K562 (cell line): ENCODE measurements at regions of chr17 and their contacts with region 1.

Region 1: GRCh38 chr17:49031965-49032928 is 35.1 kb downstream of the IGF2BP1 start:
- DNase-seq: peak; percentile 71 to 85 (median 79)
- ATAC-seq: peak; percentile 91
- H3K4me3 ChIP-seq: no peak overlapping the region
- H3K27ac ChIP-seq: no peak overlapping the region
- H3K4me1 ChIP-seq: peaks cover 2 to 13% of the 10 kb centered on the region in 2 experiments; a peak in 4 of 5 replicates
- H3K27me3 ChIP-seq: no peaks in the 10 kb centered on the region
- CTCF ChIP-seq: peak; percentile 79 to 95 (median 85)
- EP300 ChIP-seq: no peak
- POLR2A ChIP-seq: no peak
- RAD21 ChIP-seq: peak; percentile 90 to 94

Region 2: DNA sequence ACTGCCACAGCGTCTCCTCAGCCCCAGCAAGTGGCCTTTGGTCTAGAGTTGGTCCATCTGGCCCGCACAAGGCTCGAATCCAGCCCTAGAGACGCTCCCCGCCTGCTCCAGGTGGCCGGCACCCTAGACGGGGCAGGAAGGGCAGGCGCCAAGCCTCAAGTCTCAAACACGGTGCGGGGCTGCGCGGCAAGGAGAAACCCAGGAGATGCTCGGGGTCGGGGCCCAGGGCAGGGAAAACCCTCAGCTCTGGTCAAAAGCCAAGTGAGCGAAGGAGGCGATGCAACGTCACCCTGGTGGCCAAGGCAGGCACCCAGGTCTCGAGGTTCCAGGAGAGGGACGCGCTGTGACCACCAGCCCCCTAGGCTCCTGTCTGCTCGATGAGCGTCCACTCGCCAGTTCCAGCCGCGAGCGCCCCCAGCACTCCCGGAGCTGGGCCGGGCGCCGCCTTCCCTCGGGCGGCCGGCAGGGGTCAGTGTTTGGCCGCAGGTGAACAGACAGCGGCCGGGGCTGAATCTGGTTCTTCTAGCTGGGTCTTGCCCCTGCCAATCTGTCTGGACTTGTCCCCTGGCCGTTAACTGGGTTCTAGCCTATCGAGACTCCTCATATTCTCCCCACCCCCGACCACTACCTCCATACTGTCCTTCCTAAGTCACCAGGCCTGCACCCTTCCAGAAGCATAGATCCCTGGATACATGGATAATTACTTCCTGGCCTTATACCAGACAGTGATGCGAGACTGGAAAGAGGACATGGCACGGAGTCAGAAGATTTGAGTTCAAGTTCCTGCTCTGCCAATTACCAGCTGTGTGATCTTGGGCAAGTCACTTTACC is 353.9 kb before region 1 on chr17:
- CTCF ChIA-PET with region 1: interaction called, 4 read pairs
- POLR2A ChIA-PET with region 1: no interaction called
- in situ Hi-C with region 1: loop called (anchors 25 kb)
- intact Hi-C with region 1: no loop called
- DNase-seq: peak; percentile 82 to 87 (median 85)
- ATAC-seq: peak; percentile 99
- H3K4me3 ChIP-seq: no peak overlapping the region
- H3K27ac ChIP-seq: no peak overlapping the region
- H3K4me1 ChIP-seq: peaks cover 0 to 8% of the 10 kb centered on the region in 2 experiments; a peak in 2 of 5 replicates
- H3K27me3 ChIP-seq: peaks cover 20 to 21% of the 10 kb centered on the region in 2 experiments; a peak in 4 of 5 replicates
- CTCF ChIP-seq: peak; percentile 96 to 99 (median 98)
- EP300 ChIP-seq: no peak
- POLR2A ChIP-seq: no peak
- RAD21 ChIP-seq: peak; percentile 85 to 90

Region 3: DNA sequence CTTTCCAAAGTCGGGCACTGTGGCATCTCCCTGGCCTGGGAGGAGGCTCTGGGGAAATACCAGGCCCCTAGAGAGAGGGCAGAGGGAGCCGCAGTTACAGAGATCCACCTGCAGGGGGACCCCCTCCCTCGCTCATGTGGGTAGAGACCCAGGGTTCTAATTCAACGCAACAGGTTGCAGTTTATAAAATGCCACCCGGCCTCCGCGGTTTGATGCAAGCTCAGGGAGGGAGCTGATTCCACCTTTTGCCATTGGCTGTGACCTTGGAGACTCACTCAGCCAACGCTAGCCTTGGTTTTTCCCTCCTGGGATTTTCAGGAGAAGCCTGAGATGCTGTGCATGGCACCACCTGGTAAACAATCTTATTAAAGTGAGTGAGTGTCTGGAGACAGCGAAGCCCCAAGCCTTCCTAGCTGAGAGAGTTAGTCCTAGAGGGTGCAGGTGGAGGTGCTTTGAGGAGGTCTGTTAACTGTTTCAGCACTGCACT is 227.3 kb before region 1 on chr17:
- CTCF ChIA-PET with region 1: interaction called, 12 read pairs
- POLR2A ChIA-PET with region 1: no interaction called
- in situ Hi-C with region 1: loop called (anchors 10 kb)
- intact Hi-C with region 1: loop called (anchors 10 kb)
- DNase-seq: peak; percentile 64 to 86 (median 84)
- ATAC-seq: peak; percentile 97
- H3K4me3 ChIP-seq: no peak overlapping the region
- H3K27ac ChIP-seq: no peak overlapping the region
- H3K4me1 ChIP-seq: no peaks in the 10 kb centered on the region
- H3K27me3 ChIP-seq: peaks cover 27 to 33% of the 10 kb centered on the region in 2 experiments
- CTCF ChIP-seq: peak; percentile 83 to 93 (median 92)
- EP300 ChIP-seq: no peak
- POLR2A ChIP-seq: no peak
- RAD21 ChIP-seq: peak; percentile 84 to 92

Region 4: DNA sequence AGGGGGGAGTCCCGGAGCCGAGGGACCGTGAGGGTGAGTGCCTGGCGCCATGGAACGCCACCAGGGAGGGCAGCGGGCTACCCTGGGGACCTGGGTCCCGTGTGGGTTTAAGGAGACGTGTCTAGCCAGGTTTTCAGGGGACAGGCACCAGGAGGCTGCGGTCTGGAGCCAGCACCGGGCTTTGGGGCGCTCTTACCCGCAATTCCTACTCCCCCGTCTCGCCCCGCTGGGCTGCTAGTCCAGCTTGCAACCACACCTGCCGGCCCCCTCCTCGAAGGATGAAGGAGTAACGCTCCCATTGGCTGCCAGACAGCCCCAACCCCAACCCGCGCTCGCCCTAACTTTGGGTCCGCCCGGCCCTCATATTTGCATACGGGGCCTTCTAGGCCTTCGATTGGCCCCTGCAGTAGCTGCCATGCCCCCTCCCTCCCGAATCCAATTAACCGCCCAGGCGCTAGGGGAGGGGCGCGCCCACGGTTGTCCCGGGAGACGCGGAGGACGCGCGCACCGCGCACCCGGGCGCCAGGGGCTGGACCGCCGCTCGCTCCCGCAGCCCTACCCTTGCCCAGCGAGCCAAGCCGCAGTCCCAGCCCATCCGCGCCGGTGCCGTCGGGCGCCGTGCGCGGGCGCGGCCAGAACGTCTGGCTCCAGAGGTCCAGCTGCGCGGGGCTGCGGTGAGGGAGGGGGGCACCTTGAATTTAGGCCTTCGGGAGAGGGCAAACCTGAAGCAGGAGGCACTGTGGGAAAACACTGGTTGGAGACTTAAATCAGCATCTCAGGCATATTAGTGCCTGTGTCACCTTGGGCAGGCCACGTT is 215.3 kb before region 1 on chr17 and contains the start of gene TTLL6:
- CTCF ChIA-PET with region 1: interaction called, 13 read pairs
- POLR2A ChIA-PET with region 1: no interaction called
- in situ Hi-C with region 1: loop called (anchors 10 kb)
- intact Hi-C with region 1: no loop called
- DNase-seq: peak; percentile 93 to 97 (median 96)
- ATAC-seq: peak; percentile 100
- H3K4me3 ChIP-seq: peak within 1 kb of the TSS; percentile 33
- H3K27ac ChIP-seq: no peak within 1 kb of the TSS
- H3K4me1 ChIP-seq: peaks cover 0 to 11% of the 10 kb centered on the region in 2 experiments; a peak in 3 of 5 replicates
- H3K27me3 ChIP-seq: peaks cover 14 to 39% of the 10 kb centered on the region in 2 experiments
- CTCF ChIP-seq: no peak
- EP300 ChIP-seq: no peak
- POLR2A ChIP-seq: no peak
- RAD21 ChIP-seq: no peak
- polyA plus RNA-seq, gene TTLL6: not detected

Region 5: GRCh38 chr17:48954300-48954755 is 77.9 kb before region 1 on chr17:
- CTCF ChIA-PET with region 1: interaction called, 39 read pairs
- POLR2A ChIA-PET with region 1: no interaction called
- in situ Hi-C with region 1: loop called (anchors 5 kb)
- intact Hi-C with region 1: loop called (anchors 1 kb)
- DNase-seq: peak; percentile 46 to 83 (median 62)
- ATAC-seq: peak; percentile 98
- H3K4me3 ChIP-seq: no peak overlapping the region
- H3K27ac ChIP-seq: no peak overlapping the region
- H3K4me1 ChIP-seq: peaks cover 0 to 3% of the 10 kb centered on the region in 2 experiments; a peak in 2 of 5 replicates
- H3K27me3 ChIP-seq: no peaks in the 10 kb centered on the region
- CTCF ChIP-seq: peak; percentile 89 to 95 (median 90)
- EP300 ChIP-seq: no peak
- POLR2A ChIP-seq: no peak
- RAD21 ChIP-seq: peak; percentile 95 to 99